Heart right ventricle (tissue), 16 donors: ENCODE measurements at regions of chr5 and their contacts with region 1.

Region 1: DNA sequence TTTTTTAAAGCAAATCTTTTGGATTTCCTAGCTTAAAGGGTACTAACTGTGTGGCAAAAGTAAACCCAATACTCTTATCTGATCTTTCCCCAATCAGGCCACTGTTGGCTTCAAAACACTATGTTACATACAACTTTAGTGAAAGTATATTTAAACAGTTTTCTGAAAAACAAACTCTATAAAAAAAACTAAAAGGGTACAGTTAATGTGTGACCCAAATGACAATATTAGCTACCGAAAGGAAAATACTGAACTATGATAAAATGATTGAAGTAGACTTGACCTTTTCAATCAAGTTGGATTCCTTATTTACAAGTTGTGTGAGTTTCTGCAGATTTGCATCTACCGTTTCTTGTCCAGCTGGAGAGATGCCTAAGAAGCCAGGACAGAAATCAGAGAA is 5.8 kb downstream of the MTX3 start:
- DNase-seq: no peak
- ATAC-seq: no peak
- H3K4me3 ChIP-seq: no peak overlapping the region
- H3K27ac ChIP-seq: no peak overlapping the region
- H3K4me1 ChIP-seq: peaks cover 0 to 13% (median 8%) of the 10 kb centered on the region in 9 donors
- H3K27me3 ChIP-seq: no peaks in the 10 kb centered on the region
- CTCF ChIP-seq: no peak

Region 2: GRCh38 chr5:79193640-79194039 is 791.6 kb before region 1 on chr5:
- intact Hi-C with region 1: loop called in 1 of 10 experiments (anchors 5 kb)
- DNase-seq: no peak
- ATAC-seq: peak in 1 of 8 donors; percentile 42
- H3K4me3 ChIP-seq: no peak overlapping the region
- H3K27ac ChIP-seq: no peak overlapping the region
- H3K4me1 ChIP-seq: no peaks in the 10 kb centered on the region
- H3K27me3 ChIP-seq: no peaks in the 10 kb centered on the region
- CTCF ChIP-seq: no peak

Region 3: GRCh38 chr5:79771387-79771786 is 213.9 kb before region 1 on chr5:
- intact Hi-C with region 1: no loop called
- DNase-seq: no peak
- ATAC-seq: peak in 6 of 8 donors; percentile 20 to 61 (median 44)
- H3K4me3 ChIP-seq: no peak overlapping the region
- H3K27ac ChIP-seq: peak overlapping the region in 3 of 10 donors; percentile 2 to 9 (median 3)
- H3K4me1 ChIP-seq: peaks cover 0 to 24% (median 0%) of the 10 kb centered on the region in 9 donors
- H3K27me3 ChIP-seq: no peaks in the 10 kb centered on the region
- CTCF ChIP-seq: no peak

Region 4: GRCh38 chr5:79853676-79854418 is 131.4 kb before region 1 on chr5:
- intact Hi-C with region 1: no loop called
- DNase-seq: no peak
- ATAC-seq: no peak
- H3K4me3 ChIP-seq: no peak overlapping the region
- H3K27ac ChIP-seq: no peak overlapping the region
- H3K4me1 ChIP-seq: peaks cover 0 to 27% (median 6%) of the 10 kb centered on the region in 9 donors
- H3K27me3 ChIP-seq: no peaks in the 10 kb centered on the region
- CTCF ChIP-seq: no peak